Activated CD4-positive, alpha-beta memory T cell treated with anti-CD3 and anti-CD28 coated beads, Interleukin-2, amount 10 ng/mL, durations not matched to agents 7 days and 5 days (primary cell): ENCODE measurements at regions of chr2 and their contacts with region 1.

Region 1: GRCh38 chr2:64523666-64524603 is at the start of gene AFTPH:
- DNase-seq: peak; percentile 100
- H3K4me3 Mint-ChIP-seq: peak within 1 kb of the TSS; percentile 97
- H3K27ac Mint-ChIP-seq: peak within 1 kb of the TSS; percentile 98
- H3K4me1 Mint-ChIP-seq: peaks cover 40% of the 10 kb centered on the region
- H3K27me3 Mint-ChIP-seq: peaks cover 2% of the 10 kb centered on the region
- total RNA-seq, gene AFTPH: 39.2 to 40.2 TPM

Region 2: DNA sequence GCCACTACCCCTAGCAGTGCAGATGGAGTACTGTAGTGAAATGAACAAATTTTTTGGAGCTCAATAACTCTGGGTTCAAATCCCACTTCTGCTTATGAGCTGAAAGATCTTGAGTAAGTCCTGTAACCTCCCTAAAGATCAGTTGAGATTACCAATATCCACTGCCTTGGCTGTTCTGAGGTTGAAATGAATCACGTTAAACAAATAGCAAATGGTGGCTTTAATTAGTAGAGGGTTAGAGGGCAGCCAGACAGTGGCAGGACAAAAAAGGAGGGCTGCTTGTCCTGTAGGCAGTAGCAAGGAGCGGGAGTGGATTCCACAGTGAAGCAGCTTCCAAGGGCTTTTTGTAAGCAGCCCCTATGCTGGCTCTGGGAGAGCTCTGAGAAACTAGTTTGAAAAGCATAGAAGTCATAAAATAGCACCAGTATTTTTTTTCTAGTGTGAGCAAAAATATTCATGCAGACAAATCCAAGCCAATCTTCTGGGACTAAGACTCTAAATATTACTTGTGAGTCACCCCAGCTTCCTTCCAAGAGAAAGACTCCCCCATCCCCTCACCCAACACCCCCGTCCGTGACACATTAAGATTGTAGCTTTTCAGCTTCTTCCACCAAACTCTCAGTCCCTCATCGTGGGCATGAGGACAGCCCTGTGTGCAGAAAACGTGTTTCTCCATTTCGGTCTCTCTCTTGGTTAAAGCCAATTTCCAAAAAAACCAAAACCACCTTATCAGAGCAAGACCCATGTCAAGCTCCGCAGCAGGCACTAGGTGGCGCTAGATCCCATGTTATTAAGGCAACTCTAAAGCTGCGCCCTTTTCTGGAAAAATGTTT is 193.4 kb before region 1 on chr2:
- CTCF ChIA-PET with region 1: interaction called, 43 read pairs
- POLR2A ChIA-PET with region 1: interaction called, 25 read pairs
- DNase-seq: peak; percentile 80
- H3K4me3 Mint-ChIP-seq: no peak overlapping the region
- H3K27ac Mint-ChIP-seq: no peak overlapping the region
- H3K4me1 Mint-ChIP-seq: peaks cover 52% of the 10 kb centered on the region
- H3K27me3 Mint-ChIP-seq: peaks cover 5% of the 10 kb centered on the region

Region 3: DNA sequence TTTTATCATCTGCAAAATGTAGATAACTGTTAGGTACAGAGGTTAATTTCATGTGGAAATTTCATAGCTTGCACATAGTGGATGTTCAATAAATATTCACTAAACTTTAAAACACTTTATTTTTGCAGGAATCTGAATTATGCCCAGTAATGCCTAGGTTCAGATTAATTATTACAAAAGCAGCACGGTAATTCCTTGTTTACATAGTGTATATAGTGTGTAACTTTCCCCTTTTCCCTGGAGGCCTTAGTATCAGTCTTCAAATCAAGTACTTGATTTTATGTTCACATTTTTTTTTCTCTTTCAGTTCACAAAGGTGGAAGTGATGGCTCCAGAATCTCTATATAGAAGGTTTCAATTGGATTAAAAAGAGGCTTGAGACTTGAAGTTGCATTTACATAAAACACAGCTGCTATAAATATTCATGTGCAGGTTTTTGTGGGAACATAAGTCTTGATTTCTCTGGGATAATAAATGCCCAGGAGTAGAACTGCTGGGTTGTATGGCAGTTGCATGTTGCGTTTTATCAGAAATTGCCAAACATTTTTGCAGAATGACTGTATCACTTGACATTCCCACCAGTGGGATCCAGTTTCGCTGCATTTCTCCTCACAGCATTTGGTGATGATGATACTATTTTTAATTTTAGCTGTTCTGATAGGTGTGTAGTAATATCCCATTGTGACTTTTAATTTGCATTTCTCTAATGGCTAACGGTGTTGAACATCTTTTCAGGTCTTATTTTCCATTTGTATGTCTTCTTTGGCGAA is 97.6 kb before region 1 on chr2:
- CTCF ChIA-PET with region 1: no interaction called
- POLR2A ChIA-PET with region 1: no interaction called
- DNase-seq: no peak
- H3K4me3 Mint-ChIP-seq: no peak overlapping the region
- H3K27ac Mint-ChIP-seq: no peak overlapping the region
- H3K4me1 Mint-ChIP-seq: no peaks in the 10 kb centered on the region
- H3K27me3 Mint-ChIP-seq: peaks cover 23% of the 10 kb centered on the region

Region 4: GRCh38 chr2:64554117-64554516 is 30.2 kb after region 1 on chr2:
- CTCF ChIA-PET with region 1: interaction called, 37 read pairs
- POLR2A ChIA-PET with region 1: interaction called, 51 read pairs
- DNase-seq: no peak
- H3K4me3 Mint-ChIP-seq: no peak overlapping the region
- H3K27ac Mint-ChIP-seq: no peak overlapping the region
- H3K4me1 Mint-ChIP-seq: peaks cover 4% of the 10 kb centered on the region
- H3K27me3 Mint-ChIP-seq: no peaks in the 10 kb centered on the region

Region 5: GRCh38 chr2:64586883-64587481 is 63.0 kb after region 1 on chr2:
- CTCF ChIA-PET with region 1: interaction called, 10 read pairs
- POLR2A ChIA-PET with region 1: interaction called, 5 read pairs
- DNase-seq: no peak
- H3K4me3 Mint-ChIP-seq: no peak overlapping the region
- H3K27ac Mint-ChIP-seq: no peak overlapping the region
- H3K4me1 Mint-ChIP-seq: peaks cover 9% of the 10 kb centered on the region
- H3K27me3 Mint-ChIP-seq: no peaks in the 10 kb centered on the region

Region 6: GRCh38 chr2:64653349-64654062 is 129.6 kb after region 1 on chr2 and contains the start of gene SERTAD2:
- CTCF ChIA-PET with region 1: interaction called, 33 read pairs
- POLR2A ChIA-PET with region 1: interaction called, 37 read pairs
- DNase-seq: peak; percentile 87
- H3K4me3 Mint-ChIP-seq: peak within 1 kb of the TSS; percentile 91
- H3K27ac Mint-ChIP-seq: peak within 1 kb of the TSS; percentile 86
- H3K4me1 Mint-ChIP-seq: peaks cover 48% of the 10 kb centered on the region
- H3K27me3 Mint-ChIP-seq: peaks cover 11% of the 10 kb centered on the region
- total RNA-seq, gene SERTAD2: 16.2 to 17.5 TPM

Region 7: DNA sequence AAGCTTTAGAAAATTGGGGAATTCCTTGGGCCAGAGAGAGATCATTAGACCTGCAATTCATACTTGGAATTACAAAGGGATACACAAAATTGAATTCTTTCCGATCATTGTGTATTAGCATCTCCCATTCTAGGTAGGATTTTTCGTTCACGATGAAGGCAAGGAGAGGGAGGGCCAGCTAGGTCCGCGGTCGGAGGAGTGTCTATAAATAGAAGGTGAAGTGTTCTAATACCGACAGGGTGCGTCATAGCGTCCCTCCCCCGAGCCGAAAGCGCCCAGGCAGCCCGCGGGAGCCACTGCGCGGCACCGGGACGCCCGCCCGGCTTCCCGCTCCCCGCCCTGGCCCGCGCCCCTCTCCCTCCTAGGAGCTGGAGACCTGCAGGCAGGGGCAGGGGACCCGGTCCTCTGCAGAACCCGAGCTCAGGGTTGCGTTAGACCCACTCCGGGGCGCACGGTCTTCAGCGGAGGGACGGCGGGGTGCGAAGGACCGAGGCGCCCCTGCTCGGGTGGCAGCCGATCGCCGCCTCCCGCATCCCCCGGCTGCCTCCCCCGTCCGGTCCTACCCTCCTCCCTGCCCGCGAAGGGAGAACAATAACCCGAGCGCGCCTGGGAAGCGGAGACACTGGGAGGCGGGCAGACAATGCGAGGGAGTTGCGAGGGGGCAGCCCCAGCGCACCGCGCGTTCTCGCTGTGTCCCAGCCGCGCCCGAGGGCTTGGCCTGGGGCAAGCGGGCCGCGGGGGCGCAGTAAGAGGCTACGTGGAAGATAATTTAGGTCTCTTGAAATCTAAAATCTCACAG is 243.9 kb after region 1 on chr2:
- CTCF ChIA-PET with region 1: interaction called, 5 read pairs
- POLR2A ChIA-PET with region 1: interaction called, 12 read pairs
- DNase-seq: peak; percentile 84
- H3K4me3 Mint-ChIP-seq: peak overlapping the region; percentile 80
- H3K27ac Mint-ChIP-seq: peak overlapping the region; percentile 79
- H3K4me1 Mint-ChIP-seq: peaks cover 23% of the 10 kb centered on the region
- H3K27me3 Mint-ChIP-seq: peaks cover 15% of the 10 kb centered on the region

Region 8: GRCh38 chr2:64807417-64807816 is 283.5 kb after region 1 on chr2:
- CTCF ChIA-PET with region 1: no interaction called
- POLR2A ChIA-PET with region 1: no interaction called
- DNase-seq: peak; percentile 26
- H3K4me3 Mint-ChIP-seq: no peak overlapping the region
- H3K27ac Mint-ChIP-seq: no peak overlapping the region
- H3K4me1 Mint-ChIP-seq: peaks cover 8% of the 10 kb centered on the region
- H3K27me3 Mint-ChIP-seq: no peaks in the 10 kb centered on the region

Region 9: DNA sequence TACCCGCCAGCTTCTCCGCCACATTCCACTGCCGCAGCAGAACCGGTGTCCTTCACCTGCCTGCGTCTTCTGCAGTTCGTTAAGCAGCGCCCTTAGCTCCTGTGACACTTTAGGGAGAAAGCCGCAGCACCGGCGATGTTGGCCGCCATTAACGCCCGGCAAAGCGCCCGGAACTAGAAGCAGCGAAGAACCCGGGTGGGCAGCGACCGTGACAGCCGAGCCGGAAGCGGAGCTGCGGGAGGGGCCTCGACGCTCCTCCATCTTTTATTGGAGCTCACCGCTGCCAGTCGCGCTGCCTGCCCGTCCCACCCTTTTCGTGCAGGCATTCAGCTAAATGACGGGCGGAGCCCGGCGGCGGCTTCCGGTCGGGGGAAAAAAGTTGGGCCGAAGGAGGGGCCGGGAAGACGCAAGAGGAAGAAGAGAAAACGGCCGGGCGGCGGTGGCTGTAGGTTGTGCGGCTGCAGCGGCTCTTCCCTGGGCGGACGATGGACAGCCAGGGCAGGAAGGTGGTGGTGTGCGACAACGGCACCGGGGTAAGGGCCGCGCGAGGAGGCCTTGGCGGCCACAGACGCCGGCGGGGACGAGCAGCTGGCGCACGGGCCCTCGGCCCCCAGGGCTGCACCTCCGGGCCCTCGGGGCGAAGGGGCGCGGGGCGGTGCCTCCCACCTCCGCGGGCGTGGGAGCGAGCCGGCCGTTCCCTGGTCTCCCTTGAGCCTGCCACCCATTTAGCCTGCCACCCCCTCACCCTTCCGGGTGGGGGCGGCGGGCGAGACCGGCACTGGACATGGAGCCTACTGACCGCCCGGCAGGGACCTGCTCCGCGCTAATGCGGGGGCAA is 703.7 kb after region 1 on chr2 and contains the start of gene ACTR2:
- CTCF ChIA-PET with region 1: no interaction called
- POLR2A ChIA-PET with region 1: interaction called, 13 read pairs
- DNase-seq: peak; percentile 96
- H3K4me3 Mint-ChIP-seq: peak within 1 kb of the TSS; percentile 96
- H3K27ac Mint-ChIP-seq: peak within 1 kb of the TSS; percentile 99
- H3K4me1 Mint-ChIP-seq: peaks cover 46% of the 10 kb centered on the region
- H3K27me3 Mint-ChIP-seq: no peaks in the 10 kb centered on the region
- total RNA-seq, gene ACTR2: 514 to 517 TPM